PC-3 (cell line): ENCODE measurements at regions of chr4 and their contacts with region 1.

Region 1: DNA sequence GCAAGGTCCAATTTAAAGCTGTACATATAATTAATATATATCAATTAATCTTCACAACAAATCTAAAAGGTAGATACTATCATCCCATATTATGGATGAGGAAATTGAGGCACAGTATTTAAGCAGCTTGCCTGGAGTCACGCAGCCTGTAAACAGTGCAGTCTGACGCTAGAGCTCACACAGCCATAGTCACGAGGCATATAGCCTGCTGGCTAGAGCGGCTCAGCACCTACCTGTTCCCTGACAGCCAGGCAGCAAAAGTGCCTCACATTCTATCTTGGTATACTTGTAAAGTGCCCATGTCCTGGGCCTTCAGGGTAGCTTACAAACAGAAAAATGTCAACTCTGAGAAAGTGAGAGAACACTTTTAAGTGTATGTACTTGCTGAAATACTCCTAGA is 222.6 kb upstream of the NEIL3 start:
- DNase-seq: no peak
- ATAC-seq: no peak
- H3K4me3 ChIP-seq: no peak overlapping the region
- H3K27ac ChIP-seq: no peak overlapping the region
- H3K4me1 ChIP-seq: no peaks in the 10 kb centered on the region
- H3K27me3 ChIP-seq: no peaks in the 10 kb centered on the region
- CTCF ChIP-seq: no peak

Region 2: DNA sequence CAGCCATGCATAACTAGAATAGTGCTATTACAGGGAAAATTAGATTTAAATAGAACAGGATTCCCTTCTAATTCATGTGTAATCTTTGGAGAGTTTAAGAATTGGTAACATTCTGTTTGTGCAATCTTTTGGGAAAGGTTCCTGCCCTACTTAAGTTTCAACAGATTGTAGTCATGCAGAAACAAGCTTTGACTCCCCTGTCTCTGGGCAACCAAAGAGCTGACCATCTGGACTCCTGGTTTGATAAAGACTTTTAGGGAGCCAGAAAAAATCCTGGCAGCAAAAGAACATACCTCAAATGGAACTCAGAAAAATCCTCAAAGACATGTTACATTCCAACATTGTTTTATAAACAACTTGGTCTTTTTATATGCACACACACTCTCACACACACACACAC is 31.5 kb after region 1 on chr4:
- CTCF ChIA-PET with region 1: no interaction called
- POLR2A ChIA-PET with region 1: no interaction called
- intact Hi-C with region 1: loop called (anchors 1 kb)
- DNase-seq: no peak
- ATAC-seq: no peak
- H3K4me3 ChIP-seq: no peak overlapping the region
- H3K27ac ChIP-seq: no peak overlapping the region
- H3K4me1 ChIP-seq: no peaks in the 10 kb centered on the region
- H3K27me3 ChIP-seq: no peaks in the 10 kb centered on the region
- CTCF ChIP-seq: no peak